Right ventricle myocardium inferior (tissue), 1 donor: ENCODE measurements at regions of chr4 and their contacts with region 1.

Region 1: DNA sequence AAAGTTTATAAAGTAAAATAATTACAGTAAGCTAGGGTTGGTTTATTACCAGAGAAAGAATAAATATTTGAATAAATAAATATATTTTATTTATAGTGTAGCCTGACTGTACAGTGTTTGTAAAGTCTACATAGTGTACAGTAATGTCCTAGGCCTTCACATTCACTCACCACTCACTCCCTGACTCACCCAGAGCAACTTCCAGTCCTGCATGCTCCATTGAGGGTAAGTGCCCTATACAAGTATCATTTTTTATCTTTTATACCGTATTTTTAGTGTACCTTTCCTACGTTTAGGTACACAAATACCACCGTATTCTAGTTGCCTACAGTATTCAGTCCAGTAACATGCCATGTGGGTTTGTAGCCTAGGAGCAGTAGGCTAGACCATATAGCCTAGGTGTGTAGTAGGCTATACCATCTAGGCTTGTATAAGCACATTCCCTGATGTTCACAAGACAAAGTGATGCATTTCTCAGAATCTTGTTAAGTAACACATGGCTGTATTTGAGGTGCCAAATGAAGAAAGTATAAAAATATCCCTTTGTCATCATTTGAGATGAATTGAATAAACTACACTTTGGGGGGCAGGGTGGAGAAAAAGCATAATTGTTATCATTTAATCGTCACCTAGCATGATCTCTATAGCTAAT is 14.7 kb upstream of the KLHL8 start:
- DNase-seq: no peak
- ATAC-seq: no peak

Region 2: DNA sequence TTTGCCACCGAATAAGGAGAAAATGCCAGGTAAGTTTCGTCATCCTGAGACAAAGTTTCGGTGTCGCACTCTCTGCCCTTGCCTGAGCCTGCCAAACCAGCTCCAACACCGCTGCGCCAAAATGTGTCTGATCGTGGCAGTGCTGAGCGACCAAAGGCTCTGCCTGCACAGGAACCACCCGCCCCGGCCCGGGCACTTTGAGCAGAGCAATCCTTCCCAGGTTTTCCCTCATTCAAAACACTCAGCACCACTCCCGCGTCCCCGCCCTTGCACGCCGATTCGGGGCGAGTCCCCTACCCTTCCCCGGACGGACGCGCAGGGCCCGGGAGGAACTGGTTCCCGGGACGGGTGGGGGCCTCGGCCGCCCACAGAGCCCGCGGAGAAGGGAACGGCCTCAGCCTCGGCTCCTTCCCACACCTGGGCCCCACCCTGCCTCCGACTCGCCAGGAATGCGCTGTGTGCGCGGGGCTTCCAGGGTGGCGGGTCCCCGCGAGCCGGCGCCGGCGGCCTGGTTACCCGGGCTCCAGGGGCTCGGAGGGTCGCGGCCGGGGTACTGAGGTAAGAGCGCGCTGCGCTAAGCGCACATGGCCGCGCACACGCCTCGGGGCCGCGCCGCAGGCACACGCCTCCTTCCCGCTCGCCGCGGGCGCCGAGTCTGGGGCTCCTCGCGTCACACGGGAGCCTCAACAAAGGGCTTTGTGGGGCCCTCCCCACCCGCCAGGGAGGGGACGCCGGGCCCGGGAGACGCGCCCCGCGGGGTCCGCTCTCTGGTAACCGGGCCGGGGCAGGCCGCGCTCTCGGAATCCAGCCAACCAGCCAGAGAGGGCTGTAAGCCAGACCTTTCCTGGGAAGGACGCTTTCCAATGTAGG is 343.1 kb before region 1 on chr4 and contains the start of gene C4orf36:
- intact Hi-C with region 1: no loop called
- DNase-seq: peak; percentile 82
- ATAC-seq: peak; percentile 84
- total RNA-seq, gene C4orf36: 0.78 TPM

Region 3: DNA sequence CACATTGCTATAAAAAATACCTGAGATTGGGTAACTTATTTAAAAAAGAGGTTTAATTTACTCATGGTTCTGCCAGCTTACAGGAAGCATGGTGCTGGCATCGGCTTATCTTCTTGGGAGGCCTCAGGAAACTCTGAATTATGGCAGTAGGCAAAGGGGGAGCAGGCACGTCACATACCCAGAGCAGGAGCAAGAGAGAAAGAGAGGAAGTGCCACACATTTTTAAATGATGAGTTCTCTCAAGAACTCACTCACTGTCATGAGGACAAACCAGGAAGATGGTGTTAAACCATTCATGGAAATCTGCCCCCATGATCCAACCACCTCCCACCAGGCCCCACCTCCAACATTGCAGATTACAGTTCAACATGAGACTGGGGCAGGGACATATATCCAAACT is 310.3 kb before region 1 on chr4:
- intact Hi-C with region 1: loop called (anchors 5 kb)
- DNase-seq: no peak
- ATAC-seq: no peak

Region 4: GRCh38 chr4:87286970-87287369 is 51.8 kb after region 1 on chr4:
- intact Hi-C with region 1: no loop called
- DNase-seq: no peak
- ATAC-seq: no peak